Activated CD4-positive, alpha-beta T cell treated with anti-CD3 and anti-CD28 coated beads, Interleukin-2, amount 10 ng/mL, durations not matched to agents 7 days and 5 days (primary cell): ENCODE measurements at regions of chr1 and their contacts with region 1.

Region 1: DNA sequence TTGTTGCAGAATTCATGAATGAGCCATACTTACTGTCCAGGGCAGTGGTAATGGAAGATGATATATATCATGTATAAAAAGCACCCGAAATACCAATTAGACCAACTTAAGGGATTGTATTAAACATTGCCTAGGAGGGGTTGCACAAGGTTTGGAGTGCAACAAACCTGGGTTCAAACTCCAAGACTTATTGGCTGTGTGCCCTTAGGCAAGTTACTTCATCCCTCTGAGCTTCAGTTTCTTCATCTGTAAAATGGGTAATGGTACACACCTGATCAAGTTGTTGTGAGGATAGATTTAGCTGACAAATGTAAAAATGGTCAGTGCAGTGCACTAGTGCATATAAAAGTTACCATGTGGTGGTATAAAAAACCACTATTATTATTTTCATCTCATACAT is 9.8 kb upstream of the PPP1R15B start:
- DNase-seq: no peak
- H3K4me3 Mint-ChIP-seq: no peak overlapping the region
- H3K27ac Mint-ChIP-seq: no peak overlapping the region
- H3K4me1 Mint-ChIP-seq: peaks cover 27% of the 10 kb centered on the region
- H3K27me3 Mint-ChIP-seq: no peaks in the 10 kb centered on the region

Region 2: DNA sequence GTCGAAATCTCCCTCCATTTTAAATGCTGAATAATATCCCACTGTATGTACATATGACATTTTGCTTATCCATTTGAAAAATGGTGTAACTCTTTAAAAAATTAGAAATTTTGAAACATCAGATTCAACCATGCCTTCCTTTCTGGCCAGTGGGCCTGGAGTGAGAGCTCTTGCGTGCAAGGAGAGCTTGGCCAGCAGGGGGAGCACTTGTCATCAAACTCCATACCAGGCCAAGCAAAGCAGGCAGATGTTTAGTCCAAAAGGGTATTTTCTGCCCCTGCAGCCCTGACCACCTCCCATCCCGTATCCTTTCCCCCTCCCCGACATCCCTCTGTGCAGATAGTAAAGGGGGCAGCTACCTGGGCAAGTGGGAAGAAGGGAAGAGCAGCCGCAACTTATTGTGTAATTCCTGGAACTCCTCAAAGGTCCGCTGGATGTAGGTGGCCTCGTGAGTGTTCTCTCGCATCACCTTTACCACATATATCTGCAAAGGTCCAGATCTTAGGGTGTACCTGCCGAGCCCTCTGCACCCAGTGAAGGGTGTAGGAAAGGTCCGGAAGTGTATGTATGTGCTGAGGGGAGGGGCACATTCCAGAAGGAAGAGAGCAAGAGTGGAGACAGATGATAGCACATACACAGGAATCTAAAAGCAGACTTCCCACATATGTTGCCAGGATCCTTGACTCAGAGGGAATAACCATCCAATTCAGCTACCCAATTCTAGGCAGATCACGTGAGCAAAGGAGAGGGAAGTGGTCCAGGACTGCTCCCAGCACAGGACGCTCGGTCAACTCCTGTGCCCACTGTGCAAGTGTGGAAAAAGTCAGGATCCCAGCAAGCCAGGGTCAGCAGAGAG is 10.1 kb after region 1 on chr1:
- CTCF ChIA-PET with region 1: interaction called, 11 read pairs
- POLR2A ChIA-PET with region 1: no interaction called
- DNase-seq: peak; percentile 83
- H3K4me3 Mint-ChIP-seq: no peak overlapping the region
- H3K27ac Mint-ChIP-seq: no peak overlapping the region
- H3K4me1 Mint-ChIP-seq: no peaks in the 10 kb centered on the region
- H3K27me3 Mint-ChIP-seq: no peaks in the 10 kb centered on the region

Region 3: GRCh38 chr1:204465546-204466415 is 44.3 kb after region 1 on chr1:
- CTCF ChIA-PET with region 1: no interaction called
- POLR2A ChIA-PET with region 1: no interaction called
- DNase-seq: no peak
- H3K4me3 Mint-ChIP-seq: no peak overlapping the region
- H3K27ac Mint-ChIP-seq: no peak overlapping the region
- H3K4me1 Mint-ChIP-seq: peaks cover 47% of the 10 kb centered on the region
- H3K27me3 Mint-ChIP-seq: no peaks in the 10 kb centered on the region